ENCODE measurements at regions of chr17 and their contacts with region 1.

Region 1: GRCh38 chr17:1800240-1800639 is 29.5 kb downstream of the SMYD4 start:
- DNase-seq: peak; percentile 57
- H3K4me3 ChIP-seq: no peak overlapping the region
- H3K27ac ChIP-seq: peak overlapping the region; percentile 72
- H3K4me1 ChIP-seq: peaks cover 42% of the 10 kb centered on the region
- H3K27me3 ChIP-seq: no peaks in the 10 kb centered on the region
- CTCF ChIP-seq: peak; percentile 24

Region 2: GRCh38 chr17:1661045-1661444 is 139.2 kb before region 1 on chr17:
- intact Hi-C with region 1: loop called (anchors 10 kb)
- DNase-seq: no peak
- H3K4me3 ChIP-seq: no peak overlapping the region
- H3K27ac ChIP-seq: no peak overlapping the region
- H3K4me1 ChIP-seq: no peaks in the 10 kb centered on the region
- H3K27me3 ChIP-seq: no peaks in the 10 kb centered on the region
- CTCF ChIP-seq: no peak

Region 3: DNA sequence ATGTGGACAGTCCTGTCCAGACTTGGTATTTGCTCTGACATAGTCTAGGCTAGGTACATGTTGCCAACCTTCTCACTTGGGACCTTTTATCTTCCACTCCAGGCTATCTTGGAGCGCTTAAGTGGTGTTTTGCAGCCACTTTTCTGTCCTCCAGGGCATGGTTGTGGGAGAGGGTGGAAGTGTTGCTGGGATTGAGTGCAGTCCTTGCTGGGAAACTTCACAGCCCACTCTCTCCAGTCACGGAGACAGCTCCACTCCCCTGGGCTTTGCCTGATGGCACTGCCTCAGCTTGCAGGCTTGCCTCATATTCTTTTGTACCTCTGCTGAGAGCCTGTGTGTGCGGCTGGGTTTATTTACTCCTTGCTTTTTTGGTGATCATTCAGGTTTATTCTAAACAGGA is 47.0 kb after region 1 on chr17:
- intact Hi-C with region 1: no loop called
- DNase-seq: peak; percentile 45
- H3K4me3 ChIP-seq: no peak overlapping the region
- H3K27ac ChIP-seq: peak overlapping the region; percentile 57
- H3K4me1 ChIP-seq: peaks cover 32% of the 10 kb centered on the region
- H3K27me3 ChIP-seq: no peaks in the 10 kb centered on the region
- CTCF ChIP-seq: no peak